Left colon (tissue), 2 donors: ENCODE measurements at regions of chr2 and their contacts with region 1.

Region 1: GRCh38 chr2:197378494-197379307 is 56.1 kb downstream of the SF3B1 start:
- DNase-seq: peak in 1 of 2 donors; percentile 36
- ATAC-seq: peak; percentile 89

Region 2: DNA sequence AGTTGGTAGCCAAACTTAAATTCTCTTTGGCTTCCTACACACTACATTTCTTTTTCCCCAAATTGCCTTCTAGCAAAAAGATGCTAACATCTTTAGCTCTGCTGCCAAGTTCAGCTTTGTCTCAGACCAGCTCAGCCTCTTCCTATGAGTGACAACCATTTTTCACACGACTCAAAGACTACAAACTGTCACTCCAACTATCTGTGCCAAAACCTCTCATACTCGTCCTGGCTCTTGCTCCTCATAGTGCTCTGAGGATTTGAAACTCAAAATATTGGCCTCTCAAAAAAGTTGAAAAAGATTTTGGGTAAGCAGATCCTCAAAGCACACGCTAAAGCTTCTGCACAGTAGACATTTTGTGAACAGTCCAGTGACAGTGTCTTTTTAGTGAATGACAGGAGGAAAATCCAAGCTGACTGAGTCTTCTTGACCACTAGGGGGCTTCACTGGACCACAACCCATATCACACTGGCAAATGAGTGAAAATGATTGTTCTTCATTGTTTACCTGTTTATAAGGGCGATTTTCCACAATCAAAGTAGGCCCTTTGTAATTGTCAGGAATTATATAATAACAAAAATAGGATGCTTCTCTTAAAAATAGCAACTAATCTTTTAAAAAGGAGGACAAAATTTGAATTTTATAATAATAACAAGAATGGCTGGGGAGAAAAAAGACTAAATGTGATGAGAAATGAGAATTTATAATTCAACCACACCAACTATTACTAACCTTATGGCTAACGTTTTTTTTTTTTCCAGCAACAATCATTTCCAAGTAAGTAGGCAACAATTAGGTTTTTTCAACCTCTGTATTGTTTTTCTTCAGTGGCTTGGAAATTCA is 366.7 kb before region 1 on chr2:
- intact Hi-C with region 1: loop called in 1 of 2 experiments (anchors 10 kb)
- DNase-seq: no peak
- ATAC-seq: peak; percentile 80

Region 3: GRCh38 chr2:197028230-197028629 is 350.5 kb before region 1 on chr2:
- intact Hi-C with region 1: loop called in 1 of 2 experiments (anchors 10 kb)
- DNase-seq: no peak
- ATAC-seq: no peak

Region 4: GRCh38 chr2:197113275-197113711 is 265.4 kb before region 1 on chr2:
- intact Hi-C with region 1: loop called (anchors 5 to 10 kb)
- DNase-seq: no peak
- ATAC-seq: peak; percentile 34